WTC11 (cell line): ENCODE measurements at regions of chr7 and their contacts with region 1.

Region 1: DNA sequence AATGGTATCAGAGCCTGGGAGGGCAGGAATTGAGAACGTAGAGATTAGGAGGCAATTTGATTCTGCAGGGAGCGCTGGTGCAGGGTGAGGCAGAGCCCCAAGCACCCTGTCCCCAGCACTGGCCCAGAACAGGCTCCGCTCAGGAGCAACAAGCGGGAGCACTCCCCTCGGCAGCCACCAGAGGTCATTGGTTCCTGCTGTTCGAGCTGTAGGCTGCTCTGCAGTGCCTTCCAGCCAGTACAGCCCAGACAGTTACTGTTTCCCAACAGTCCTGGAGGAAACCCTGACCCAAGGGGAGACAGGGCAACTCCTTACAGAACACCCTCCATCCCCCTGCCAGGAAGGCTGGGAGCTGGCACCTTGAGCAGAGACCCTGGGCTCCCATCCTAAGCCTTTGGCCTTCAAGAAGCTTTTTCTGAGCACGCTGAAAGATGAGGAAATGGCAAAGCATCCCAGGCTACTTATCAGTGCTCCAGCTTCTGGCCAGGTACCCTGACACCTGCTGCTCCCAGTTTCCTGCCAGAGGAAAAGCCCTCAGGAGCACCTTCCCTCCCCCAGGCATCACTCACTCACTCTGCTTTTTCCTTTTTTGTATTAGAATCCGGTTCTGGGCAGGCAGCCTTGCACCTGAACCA is 71.2 kb upstream of the EFCAB10 start:
- DNase-seq: peak; percentile 94
- ATAC-seq: peak; percentile 81
- H3K4me3 Mint-ChIP-seq: peak overlapping the region; percentile 8; the same call in 1 of the 2 replicates
- H3K27ac Mint-ChIP-seq: peak overlapping the region; percentile 97
- H3K4me1 Mint-ChIP-seq: peaks cover 98% of the 10 kb centered on the region
- H3K27me3 Mint-ChIP-seq: no peaks in the 10 kb centered on the region
- CTCF ChIP-seq: peak; percentile 74

Region 2: GRCh38 chr7:105046414-105046813 is 606.1 kb before region 1 on chr7:
- CTCF ChIA-PET with region 1: no interaction called
- POLR2A ChIA-PET with region 1: no interaction called
- DNase-seq: no peak
- ATAC-seq: no peak
- H3K4me3 Mint-ChIP-seq: no peak overlapping the region
- H3K27ac Mint-ChIP-seq: no peak overlapping the region
- H3K4me1 Mint-ChIP-seq: no peaks in the 10 kb centered on the region
- H3K27me3 Mint-ChIP-seq: no peaks in the 10 kb centered on the region
- CTCF ChIP-seq: no peak

Region 3: DNA sequence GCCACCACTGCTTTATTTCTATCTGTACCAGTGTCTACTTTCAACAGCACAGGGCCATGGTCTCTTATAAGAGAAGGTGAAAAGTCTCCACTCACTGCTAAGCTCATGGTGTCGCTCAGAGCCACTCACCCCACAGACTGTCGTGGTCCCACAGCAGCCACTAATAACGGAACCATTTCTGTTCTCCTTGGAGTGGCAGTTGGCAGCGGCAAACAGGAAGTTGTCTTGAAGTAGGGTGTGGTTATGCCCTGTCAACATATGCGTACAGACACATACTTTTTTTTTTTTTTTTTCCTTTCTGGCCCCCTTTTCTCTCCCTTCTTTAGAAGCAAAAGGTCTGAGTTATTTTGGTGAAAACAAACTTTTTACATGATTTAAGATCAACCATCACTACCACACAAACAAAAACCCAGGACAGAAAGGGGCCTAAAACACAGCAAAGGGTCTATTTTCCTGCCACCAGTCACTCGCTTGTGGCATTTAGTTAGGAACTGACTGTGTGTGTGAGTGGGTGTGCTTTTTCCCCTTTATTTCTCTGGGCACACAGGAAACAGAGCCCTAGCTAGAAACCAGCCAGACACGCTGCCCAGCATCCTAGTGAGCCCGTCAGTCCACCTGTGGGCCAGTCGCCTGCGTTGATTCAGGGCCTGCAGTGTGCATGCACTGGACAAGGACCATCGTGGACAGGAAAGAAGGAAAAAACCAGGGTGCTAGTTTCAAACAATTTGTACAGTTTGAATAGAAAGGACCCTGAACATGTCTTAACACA is 25.5 kb after region 1 on chr7:
- CTCF ChIA-PET with region 1: interaction called, 54 read pairs
- POLR2A ChIA-PET with region 1: no interaction called
- DNase-seq: no peak
- ATAC-seq: no peak
- H3K4me3 Mint-ChIP-seq: no peak overlapping the region
- H3K27ac Mint-ChIP-seq: peak overlapping the region; percentile 31; the same call in 1 of the 2 replicates
- H3K4me1 Mint-ChIP-seq: peaks cover 76% of the 10 kb centered on the region
- H3K27me3 Mint-ChIP-seq: no peaks in the 10 kb centered on the region
- CTCF ChIP-seq: no peak

Region 4: GRCh38 chr7:105743351-105744090 is 91.0 kb after region 1 on chr7:
- CTCF ChIA-PET with region 1: interaction called, 19 read pairs
- POLR2A ChIA-PET with region 1: no interaction called
- DNase-seq: no peak
- ATAC-seq: peak; percentile 52
- H3K4me3 Mint-ChIP-seq: no peak overlapping the region
- H3K27ac Mint-ChIP-seq: no peak overlapping the region
- H3K4me1 Mint-ChIP-seq: peaks cover 38% of the 10 kb centered on the region
- H3K27me3 Mint-ChIP-seq: no peaks in the 10 kb centered on the region
- CTCF ChIP-seq: no peak

Region 5: DNA sequence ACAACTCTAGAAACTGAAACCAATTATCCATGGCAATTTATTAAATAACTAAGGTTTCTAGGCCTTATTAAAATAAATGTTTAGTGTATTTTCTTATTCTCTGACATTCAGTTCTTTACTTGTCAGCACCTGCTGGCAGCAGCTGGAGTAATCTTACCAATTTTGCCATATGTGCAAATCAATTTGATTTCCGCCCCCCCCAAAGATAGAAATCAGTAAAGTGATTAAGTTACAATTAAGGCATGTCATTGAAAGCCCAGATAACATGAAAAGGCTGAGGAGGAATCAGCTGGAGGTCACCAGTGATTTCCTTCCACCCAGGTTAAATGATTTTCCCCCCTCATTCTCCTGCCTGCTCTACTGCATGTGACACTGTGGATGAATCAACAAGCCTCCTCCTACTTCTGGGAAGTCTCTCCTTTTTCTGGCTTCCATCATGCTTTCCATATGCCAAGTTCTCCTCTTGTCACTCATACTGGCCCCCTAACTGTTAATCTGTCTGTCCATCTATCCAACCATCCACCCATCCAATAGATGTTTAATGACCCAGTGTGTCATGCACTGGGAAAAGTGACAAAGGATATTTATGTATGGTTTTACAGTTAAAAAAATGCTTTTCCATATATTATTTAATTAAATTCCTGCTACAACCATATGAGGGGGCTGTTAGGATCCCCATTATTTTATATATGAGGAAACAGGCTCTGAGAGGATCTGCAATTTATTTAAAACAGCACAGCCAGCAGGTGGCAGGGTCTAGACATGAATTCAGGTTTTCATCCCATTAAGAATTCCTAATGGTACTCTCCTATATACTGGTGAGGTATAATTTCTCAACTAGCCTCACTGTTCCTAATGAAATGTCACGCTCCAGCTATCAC is 107.4 kb after region 1 on chr7:
- CTCF ChIA-PET with region 1: interaction called, 12 read pairs
- POLR2A ChIA-PET with region 1: no interaction called
- DNase-seq: peak; percentile 38
- ATAC-seq: no peak; the same call in 1 of the 2 replicates
- H3K4me3 Mint-ChIP-seq: no peak overlapping the region
- H3K27ac Mint-ChIP-seq: peak overlapping the region; percentile 61
- H3K4me1 Mint-ChIP-seq: peaks cover 38% of the 10 kb centered on the region
- H3K27me3 Mint-ChIP-seq: no peaks in the 10 kb centered on the region
- CTCF ChIP-seq: no peak

Region 6: DNA sequence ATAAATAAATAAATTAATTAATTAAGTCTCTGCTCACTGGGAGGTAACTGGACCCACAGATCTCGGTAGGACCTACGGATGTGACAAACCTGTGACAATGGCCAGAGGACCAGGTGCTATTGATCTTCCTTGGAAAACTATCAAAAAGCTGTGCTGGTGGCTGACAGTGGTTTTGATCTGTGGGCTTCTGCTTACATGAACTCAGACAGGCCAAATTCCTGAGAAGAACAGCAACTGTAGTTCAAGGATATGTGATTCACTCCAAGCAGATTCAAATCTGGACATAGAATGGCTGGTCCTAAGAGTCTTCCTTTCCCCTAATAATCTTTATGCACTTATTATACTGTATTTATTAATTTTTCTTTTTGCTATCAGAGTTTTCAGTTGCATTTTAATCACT is 143.9 kb after region 1 on chr7:
- CTCF ChIA-PET with region 1: interaction called, 12 read pairs
- POLR2A ChIA-PET with region 1: no interaction called
- DNase-seq: no peak
- ATAC-seq: no peak
- H3K4me3 Mint-ChIP-seq: no peak overlapping the region
- H3K27ac Mint-ChIP-seq: no peak overlapping the region
- H3K4me1 Mint-ChIP-seq: peaks cover 59% of the 10 kb centered on the region
- H3K27me3 Mint-ChIP-seq: no peaks in the 10 kb centered on the region
- CTCF ChIP-seq: no peak

Region 7: DNA sequence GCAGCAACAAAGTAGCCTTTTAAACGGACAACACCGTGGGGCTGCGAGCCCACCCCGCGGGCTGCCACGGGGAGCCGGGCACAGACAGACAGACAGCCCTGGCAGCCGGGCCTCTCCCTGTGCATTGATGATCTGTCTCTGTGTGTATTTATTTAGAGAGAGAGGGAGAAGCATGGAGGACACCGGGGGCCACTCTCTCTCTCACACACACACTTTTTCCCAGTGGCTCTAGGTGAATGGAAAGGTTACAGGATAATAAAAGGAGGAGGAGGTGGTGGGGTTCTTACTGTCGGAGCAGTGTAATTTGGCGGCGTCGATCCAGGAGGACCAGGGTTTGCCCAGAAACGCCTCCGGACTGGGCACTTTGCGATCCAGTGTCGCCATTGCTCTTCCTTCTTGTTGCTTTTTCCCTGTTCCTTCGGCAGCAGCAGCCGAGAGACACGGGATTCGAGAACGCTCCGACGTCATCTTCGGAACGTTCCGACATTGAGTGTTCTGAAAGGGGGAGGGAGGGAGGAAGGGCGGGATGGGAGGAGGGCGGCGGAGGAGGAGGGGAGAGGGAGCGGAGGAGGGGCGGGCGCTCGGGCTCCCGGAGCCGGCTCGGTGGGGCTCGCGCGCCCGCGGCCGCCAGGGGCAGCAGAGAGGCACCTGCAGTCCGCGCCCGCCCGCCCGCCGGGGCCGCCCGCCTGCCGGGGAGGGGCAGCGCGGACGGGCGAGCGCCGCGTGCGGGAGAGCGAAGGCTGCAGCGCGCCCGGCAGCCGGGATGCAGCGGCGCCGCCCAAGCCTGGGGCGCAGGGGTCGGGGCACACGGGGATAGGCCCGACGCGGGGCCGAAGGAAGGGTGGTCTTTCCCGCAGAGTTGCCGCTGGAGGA is 223.9 kb after region 1 on chr7 and contains the start of gene ATXN7L1:
- CTCF ChIA-PET with region 1: interaction called, 12 read pairs
- POLR2A ChIA-PET with region 1: interaction called, 3 read pairs
- DNase-seq: peak; percentile 95
- ATAC-seq: peak; percentile 87
- H3K4me3 Mint-ChIP-seq: peak within 1 kb of the TSS; percentile 98
- H3K27ac Mint-ChIP-seq: peak within 1 kb of the TSS; percentile 99
- H3K4me1 Mint-ChIP-seq: peaks cover 60% of the 10 kb centered on the region
- H3K27me3 Mint-ChIP-seq: peaks cover 10% of the 10 kb centered on the region
- CTCF ChIP-seq: peak; percentile 52; the same call in 1 of the 2 replicates
- total RNA-seq, gene ATXN7L1: 36.0 to 38.5 TPM (median 37.7 TPM) in 3 replicates

Region 8: DNA sequence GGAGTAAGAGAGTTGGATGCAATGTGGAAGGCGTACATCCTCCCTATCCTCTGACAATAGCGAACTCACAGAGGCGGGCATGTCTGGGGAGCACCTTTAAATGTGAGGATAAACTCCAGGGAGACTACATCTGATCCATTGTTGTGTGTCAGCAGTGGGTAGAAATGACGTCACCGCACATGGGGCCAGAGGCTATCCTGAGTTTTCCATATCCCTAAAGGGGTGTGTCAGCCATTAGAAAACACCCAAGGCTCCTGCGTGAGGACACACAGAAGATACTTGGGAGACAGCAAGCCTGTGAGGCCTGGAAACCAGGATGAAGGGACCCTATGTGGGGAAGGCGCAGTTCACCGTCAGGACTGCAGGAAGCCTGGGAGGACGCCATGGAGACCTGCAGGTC is 293.4 kb after region 1 on chr7:
- CTCF ChIA-PET with region 1: no interaction called
- POLR2A ChIA-PET with region 1: no interaction called
- DNase-seq: no peak
- ATAC-seq: no peak; the same call in 1 of the 2 replicates
- H3K4me3 Mint-ChIP-seq: no peak overlapping the region
- H3K27ac Mint-ChIP-seq: no peak overlapping the region
- H3K4me1 Mint-ChIP-seq: peaks cover 8% of the 10 kb centered on the region
- H3K27me3 Mint-ChIP-seq: no peaks in the 10 kb centered on the region; the same call in 1 of the 2 replicates
- CTCF ChIP-seq: no peak

Region 9: DNA sequence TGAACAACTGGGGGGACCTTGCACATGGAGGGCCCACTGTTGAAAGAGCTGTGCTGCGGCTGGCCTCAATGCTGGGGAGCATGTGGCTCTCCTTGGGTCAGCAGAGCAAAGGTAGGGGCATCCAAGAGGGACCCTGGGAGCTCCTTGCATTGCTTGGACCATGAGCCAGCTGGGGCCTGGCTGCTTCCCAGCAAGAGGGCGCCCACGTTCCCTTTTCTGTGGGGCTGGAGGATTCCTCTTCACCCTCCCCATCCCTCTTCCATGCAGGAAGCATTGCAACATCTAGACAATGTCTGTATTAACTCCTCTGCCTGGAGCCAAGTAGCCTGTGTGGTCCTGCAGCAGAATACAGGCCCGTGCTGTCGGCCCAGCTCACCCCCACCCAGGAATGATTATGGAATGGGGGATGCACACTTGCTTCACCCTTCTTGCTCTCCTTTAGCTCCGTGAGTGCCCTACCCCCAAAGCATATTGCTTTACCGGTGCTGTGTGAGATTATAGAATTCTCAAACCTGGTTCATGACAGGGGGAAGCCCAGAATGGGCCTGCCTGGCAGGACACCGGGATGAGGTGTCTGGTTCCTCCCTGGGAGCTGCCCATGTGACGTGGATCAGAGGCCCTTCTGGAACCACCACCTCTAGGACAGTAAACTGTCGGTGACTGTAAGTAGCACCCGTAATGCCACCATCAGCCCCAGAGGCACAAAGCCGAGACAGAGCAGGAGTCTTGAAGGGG is 397.7 kb after region 1 on chr7:
- CTCF ChIA-PET with region 1: interaction called, 10 read pairs
- POLR2A ChIA-PET with region 1: no interaction called
- DNase-seq: peak; percentile 46
- ATAC-seq: peak; percentile 79
- H3K4me3 Mint-ChIP-seq: no peak overlapping the region
- H3K27ac Mint-ChIP-seq: no peak overlapping the region
- H3K4me1 Mint-ChIP-seq: peaks cover 13% of the 10 kb centered on the region
- H3K27me3 Mint-ChIP-seq: no peaks in the 10 kb centered on the region; the same call in none of the 2 replicates
- CTCF ChIP-seq: no peak